GM18951 (cell line): ENCODE measurements at regions of chr15 and their contacts with region 1.

Region 1: GRCh38 chr15:68875377-68876116 is 54.8 kb upstream of the SPESP1 start:
- POLR2A ChIP-seq: no peak

Region 2: DNA sequence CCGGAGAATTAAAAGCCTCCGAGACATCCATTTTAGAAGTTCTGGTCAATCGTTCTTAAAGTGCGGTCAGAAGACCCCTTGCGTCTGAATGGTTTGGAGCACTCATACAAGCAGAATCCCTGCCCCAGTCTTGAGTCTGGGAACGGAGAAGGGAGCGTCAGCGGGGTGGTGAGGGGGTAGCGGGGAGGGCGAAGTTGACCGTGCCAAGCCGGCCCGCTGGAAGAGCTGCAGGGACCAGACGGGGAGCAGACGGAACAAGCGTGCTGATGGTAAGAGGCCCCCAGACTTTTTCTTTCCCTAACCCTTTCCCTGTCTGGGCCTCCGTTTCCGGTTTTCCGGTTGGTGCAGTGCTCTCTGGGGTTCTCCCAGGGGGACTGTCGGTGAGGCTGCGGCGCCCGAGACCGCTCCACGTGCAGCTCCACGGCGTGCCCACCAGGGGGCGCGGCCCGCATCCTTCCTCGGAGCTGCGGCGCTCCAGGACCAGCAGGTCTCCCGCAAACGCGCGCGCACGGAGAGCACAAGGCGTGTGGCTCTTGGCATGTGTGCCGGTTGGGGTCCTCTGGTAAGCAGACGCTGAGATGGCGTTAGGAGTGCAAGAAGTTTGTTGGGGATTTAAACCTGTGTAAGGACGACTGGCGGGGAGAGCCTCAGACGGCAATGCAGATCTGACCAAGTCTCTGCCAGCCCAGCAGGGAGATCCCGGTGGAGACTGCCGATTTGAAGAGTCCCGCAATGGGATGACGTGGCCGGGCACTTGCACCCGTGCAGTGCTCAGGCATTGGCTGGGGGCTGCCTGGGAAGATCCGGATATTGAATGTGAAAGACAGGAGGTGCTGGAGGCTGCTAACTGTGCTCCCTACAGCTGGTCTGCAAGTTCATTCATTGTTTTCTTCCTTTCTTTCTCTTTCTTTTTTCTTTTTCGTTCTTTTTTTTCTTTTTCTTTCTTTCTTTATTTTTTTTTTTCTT is 315.9 kb before region 1 on chr15:
- in situ Hi-C with region 1: loop called (anchors 25 kb)
- POLR2A ChIP-seq: no peak

Region 3: DNA sequence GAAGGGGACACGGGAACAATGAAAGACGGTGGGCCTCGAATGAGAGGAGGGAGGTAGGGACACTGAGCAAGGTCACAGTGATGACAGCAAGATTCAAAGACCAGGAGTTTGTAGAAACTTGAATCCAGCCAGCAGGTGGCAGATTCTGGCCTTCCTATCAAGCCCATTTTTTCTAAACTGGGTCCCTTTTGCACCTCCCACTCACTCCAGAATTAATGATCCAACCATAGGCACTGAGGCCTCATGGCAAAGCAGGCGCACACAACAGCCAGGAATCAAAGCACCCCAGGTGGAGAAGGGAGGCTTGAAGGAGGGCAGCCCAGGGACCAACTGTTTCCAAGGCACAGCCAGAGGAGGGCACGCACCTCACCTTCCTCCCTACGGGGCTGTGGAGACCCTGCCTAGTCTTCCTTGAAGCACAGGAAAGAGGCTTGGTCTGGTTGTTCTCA is 145.1 kb before region 1 on chr15:
- in situ Hi-C with region 1: loop called (anchors 5 kb)
- POLR2A ChIP-seq: no peak

Region 4: DNA sequence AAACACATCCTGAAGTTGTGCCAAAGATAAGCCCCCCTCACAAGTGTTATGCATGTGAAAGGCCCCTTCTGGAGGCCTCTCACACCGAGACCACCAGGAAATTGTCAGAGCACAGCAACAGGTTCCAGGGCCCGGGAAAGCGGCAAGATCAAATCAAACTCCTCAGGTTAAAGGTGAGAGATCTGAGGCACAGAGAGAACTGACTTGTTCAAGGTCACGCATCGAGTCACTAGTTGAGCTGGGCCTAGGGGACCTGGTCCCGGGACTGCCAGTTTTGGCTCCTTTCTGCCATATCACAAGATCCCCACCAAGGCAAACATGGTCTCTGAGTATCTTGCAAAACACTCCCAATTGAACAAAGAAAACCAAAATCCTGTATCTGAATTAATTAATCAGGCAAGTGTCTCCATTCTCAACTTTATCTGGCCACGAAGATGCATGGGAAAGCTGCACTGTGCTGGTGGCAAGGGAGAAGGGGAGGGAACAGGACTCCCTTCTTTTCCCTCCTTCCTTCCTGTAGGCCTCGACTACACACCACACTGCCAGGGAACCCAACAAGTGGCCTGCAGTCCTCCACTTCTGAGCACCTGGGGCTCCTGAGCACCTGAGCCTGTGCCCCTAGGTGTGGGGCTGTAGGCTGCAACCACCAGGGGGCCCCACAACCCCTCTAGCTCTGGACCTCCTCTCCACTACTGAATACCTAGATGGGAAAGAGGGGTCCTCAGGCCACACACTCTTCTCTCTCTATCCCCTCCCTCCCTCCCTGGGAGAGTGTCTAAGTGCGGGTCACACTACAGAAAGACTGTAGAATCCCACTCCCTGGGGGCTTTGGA is 92.1 kb before region 1 on chr15:
- in situ Hi-C with region 1: loop called (anchors 10 kb)
- POLR2A ChIP-seq: no peak